ENCODE measurements at regions of chr6 and their contacts with region 1.

Region 1: GRCh38 chr6:107459283-107460082 is at the start of gene PDSS2:
- DNase-seq: peak; percentile 95
- ATAC-seq: peak; percentile 96
- H3K4me3 Mint-ChIP-seq: peak within 1 kb of the TSS; percentile 95
- H3K27ac Mint-ChIP-seq: peak within 1 kb of the TSS; percentile 90
- H3K4me1 Mint-ChIP-seq: peaks cover 16% of the 10 kb centered on the region
- H3K27me3 Mint-ChIP-seq: no peaks in the 10 kb centered on the region
- CTCF ChIP-seq: no peak
- total RNA-seq, gene PDSS2: 14.6 and 19.3 TPM in 2 replicates

Region 2: DNA sequence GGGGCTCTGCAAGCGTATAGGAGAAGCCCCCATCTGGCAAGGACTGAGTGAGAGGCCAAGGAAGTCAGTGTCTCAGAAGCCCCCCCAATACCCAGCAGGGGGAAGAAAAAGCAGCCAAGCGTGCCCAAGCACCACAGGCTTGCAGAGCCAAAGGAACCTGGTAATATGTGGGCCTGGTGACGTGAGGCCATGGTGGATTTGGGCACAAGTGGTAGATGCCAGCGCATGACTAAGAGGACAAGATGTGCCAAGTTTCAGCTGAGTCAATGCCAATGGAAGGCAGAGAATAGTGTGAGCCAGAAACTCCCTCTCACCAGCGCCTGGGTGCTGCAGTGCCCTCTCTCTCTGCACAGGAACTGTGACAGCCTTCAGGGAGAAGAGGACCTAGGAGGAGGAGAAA is 720.1 kb before region 1 on chr6:
- CTCF ChIA-PET with region 1: no interaction called
- POLR2A ChIA-PET with region 1: no interaction called
- intact Hi-C with region 1: no loop called
- DNase-seq: no peak
- ATAC-seq: peak; percentile 50
- H3K4me3 Mint-ChIP-seq: no peak overlapping the region
- H3K27ac Mint-ChIP-seq: peak overlapping the region; percentile 73
- H3K4me1 Mint-ChIP-seq: peaks cover 51% of the 10 kb centered on the region
- H3K27me3 Mint-ChIP-seq: no peaks in the 10 kb centered on the region
- CTCF ChIP-seq: no peak

Region 3: GRCh38 chr6:107318100-107318736 is 141.3 kb before region 1 on chr6:
- CTCF ChIA-PET with region 1: interaction called, 18 read pairs
- POLR2A ChIA-PET with region 1: interaction called, 16 read pairs
- intact Hi-C with region 1: loop called (anchors 1 kb)
- DNase-seq: no peak
- ATAC-seq: peak; percentile 85
- H3K4me3 Mint-ChIP-seq: no peak overlapping the region
- H3K27ac Mint-ChIP-seq: no peak overlapping the region
- H3K4me1 Mint-ChIP-seq: peaks cover 15% of the 10 kb centered on the region
- H3K27me3 Mint-ChIP-seq: no peaks in the 10 kb centered on the region
- CTCF ChIP-seq: no peak

Region 4: DNA sequence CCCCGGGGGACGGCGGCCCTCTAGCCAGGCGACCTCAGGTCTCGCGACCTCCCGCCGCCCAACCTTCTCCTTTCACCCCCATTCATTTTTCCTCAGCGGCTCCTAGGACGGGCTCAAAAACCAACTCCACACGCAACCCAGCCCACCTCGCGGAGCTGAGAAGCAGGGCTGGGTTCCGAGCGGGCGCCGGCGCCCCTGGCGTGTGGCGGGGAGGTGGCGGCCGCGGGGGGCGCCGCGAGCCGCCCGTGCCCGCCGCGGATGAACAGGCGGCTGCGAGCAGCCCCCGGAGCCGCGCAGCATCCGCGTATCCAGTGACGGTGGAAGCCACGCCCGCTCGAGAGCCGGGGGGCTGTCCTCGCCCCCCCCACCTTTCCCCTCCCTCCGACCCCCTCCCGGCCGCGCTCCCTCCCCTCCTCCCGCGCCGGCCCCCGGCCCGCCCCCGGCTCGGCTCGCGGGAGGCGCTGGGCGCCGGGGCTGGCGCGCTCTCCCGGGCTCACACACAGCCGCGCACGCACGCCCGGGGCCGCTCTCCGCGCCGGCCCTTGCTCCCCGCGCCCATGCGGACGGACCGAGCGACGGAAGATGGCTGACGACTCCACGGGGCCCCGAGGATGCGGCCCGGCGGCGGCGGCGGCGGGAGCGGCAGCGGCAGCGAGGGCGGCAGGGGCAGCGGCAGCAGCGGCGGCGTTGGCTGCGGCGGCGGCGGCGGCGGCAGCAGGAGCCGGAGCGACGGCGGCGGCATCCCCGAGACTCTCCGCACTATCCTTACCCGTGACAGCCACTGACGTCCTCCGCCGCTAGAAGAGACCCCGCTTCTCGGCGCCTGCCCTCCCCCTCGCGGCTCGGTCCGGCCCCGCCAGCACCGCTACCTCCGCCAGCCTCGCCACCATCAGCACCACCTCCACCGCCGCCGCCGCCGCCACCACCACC is 30.4 kb after region 1 on chr6 and contains the start of gene SOBP:
- CTCF ChIA-PET with region 1: interaction called, 3 read pairs
- POLR2A ChIA-PET with region 1: interaction called, 39 read pairs
- intact Hi-C with region 1: loop called (anchors 1 kb)
- DNase-seq: peak; percentile 58
- ATAC-seq: peak; percentile 60
- H3K4me3 Mint-ChIP-seq: peak within 1 kb of the TSS; percentile 90
- H3K27ac Mint-ChIP-seq: peak within 1 kb of the TSS; percentile 63
- H3K4me1 Mint-ChIP-seq: peaks cover 26% of the 10 kb centered on the region
- H3K27me3 Mint-ChIP-seq: peaks cover 28% of the 10 kb centered on the region
- CTCF ChIP-seq: no peak
- total RNA-seq, gene SOBP: 1.1 TPM in 2 replicates

Region 5: DNA sequence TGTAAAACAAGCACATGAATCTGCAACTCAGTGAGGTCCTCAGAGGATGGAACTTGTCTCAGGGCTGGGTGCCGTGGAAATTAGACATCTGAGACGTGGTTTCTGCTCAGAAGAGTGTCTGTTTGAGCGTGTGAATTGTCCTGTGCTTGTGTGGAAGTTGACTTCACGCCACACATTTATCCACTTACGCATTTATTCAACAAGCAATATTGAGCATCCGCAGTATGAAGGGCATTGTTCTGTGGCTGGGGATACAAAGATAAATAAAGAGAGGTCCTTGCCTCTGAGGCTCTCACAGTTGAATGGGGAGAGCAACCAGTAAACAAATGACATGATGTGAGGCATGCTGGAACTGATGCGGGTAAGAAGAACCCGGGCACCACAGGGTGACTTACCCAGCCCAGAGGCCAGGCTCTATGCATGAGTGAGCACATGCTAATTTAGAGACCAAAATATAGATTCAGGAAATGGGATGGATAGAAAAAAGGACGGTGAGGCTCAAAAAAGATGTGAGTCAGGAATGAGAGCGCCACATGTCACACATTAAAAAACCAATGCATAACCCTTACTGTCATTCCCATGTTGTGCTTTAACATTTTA is 90.9 kb after region 1 on chr6:
- CTCF ChIA-PET with region 1: no interaction called
- POLR2A ChIA-PET with region 1: no interaction called
- intact Hi-C with region 1: no loop called
- DNase-seq: no peak
- ATAC-seq: peak; percentile 72
- H3K4me3 Mint-ChIP-seq: peak overlapping the region; percentile 38
- H3K27ac Mint-ChIP-seq: peak overlapping the region; percentile 35
- H3K4me1 Mint-ChIP-seq: peaks cover 18% of the 10 kb centered on the region
- H3K27me3 Mint-ChIP-seq: no peaks in the 10 kb centered on the region
- CTCF ChIP-seq: no peak

Region 6: DNA sequence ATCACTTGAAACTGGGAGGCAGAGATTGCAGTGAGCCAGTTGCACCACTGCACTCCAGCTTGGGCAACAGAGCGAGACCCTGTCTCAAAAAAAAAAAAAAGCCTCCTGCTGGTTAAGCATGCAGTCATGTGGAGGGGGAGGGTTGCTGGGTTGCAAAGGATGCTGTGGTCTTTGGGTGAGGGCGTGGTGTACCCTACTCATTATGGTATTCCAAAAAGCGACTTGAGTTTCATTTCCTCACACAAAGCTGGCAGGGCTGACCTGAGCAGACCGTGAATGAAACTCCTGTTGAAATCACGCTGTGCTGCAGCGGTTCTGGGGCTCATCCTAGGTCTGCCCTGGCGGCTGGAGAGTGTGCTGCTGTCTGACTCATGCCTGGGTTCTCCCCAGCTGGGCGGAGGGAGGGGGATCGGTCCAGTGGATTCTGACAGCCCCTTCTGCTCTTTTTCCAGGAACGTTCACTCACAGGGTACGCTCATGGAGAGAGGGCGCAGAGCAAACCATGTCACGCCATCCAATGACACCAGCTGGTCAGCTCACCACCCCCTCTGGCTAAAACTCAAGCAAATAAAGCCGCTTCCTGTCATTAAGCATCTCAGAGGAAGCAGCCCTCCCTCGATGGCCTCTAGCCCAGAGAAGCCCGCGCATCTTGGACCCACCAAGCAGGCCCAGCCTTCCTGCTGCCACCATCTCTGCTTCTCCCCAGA is 198.4 kb after region 1 on chr6:
- CTCF ChIA-PET with region 1: interaction called, 6 read pairs
- POLR2A ChIA-PET with region 1: interaction called, 61 read pairs
- intact Hi-C with region 1: loop called (anchors 1 kb)
- DNase-seq: peak; percentile 70
- ATAC-seq: peak; percentile 89
- H3K4me3 Mint-ChIP-seq: peak overlapping the region; percentile 82
- H3K27ac Mint-ChIP-seq: peak overlapping the region; percentile 96
- H3K4me1 Mint-ChIP-seq: peaks cover 67% of the 10 kb centered on the region
- H3K27me3 Mint-ChIP-seq: no peaks in the 10 kb centered on the region
- CTCF ChIP-seq: no peak

Region 7: DNA sequence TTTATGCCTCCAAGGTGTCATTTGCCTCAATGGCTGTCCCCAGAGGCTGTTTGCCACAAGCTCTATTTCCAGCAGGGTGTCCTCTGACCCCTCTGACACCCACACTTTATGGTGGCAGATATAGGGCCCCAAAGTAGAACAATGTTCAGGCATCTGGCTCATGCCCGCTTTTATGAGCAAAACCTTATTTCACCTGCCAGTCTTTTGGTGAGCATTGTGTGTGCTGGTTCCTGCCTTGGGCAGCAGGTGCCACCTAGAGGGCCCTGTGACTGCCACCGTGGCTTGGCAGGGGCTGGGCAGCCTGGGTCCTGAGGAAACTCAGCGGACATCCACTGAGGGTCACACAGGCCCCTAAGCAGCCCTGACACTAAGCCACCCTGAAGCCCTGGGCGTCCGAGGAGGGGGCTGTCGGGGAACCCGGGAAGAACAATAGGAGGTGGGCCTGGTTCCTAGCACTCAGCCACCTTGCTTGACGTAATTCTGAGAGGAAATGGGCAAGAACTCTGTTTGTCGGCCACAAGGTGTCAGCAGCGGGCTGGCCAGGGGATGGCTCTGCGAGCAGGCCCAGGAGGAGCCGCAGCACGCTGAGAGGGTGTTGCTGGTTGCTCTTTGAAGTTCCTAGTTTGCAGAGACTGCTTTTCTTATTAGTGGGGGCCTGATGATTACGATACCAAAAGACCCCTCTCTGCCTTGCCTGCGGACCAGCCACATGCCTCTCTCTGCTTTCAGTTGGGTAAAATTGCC is 215.7 kb after region 1 on chr6:
- CTCF ChIA-PET with region 1: interaction called, 6 read pairs
- POLR2A ChIA-PET with region 1: interaction called, 8 read pairs
- intact Hi-C with region 1: loop called (anchors 1 kb)
- DNase-seq: peak; percentile 78
- ATAC-seq: peak; percentile 91
- H3K4me3 Mint-ChIP-seq: peak overlapping the region; percentile 82
- H3K27ac Mint-ChIP-seq: peak overlapping the region; percentile 95
- H3K4me1 Mint-ChIP-seq: peaks cover 28% of the 10 kb centered on the region
- H3K27me3 Mint-ChIP-seq: peaks cover 3% of the 10 kb centered on the region
- CTCF ChIP-seq: peak; percentile 67

Region 8: DNA sequence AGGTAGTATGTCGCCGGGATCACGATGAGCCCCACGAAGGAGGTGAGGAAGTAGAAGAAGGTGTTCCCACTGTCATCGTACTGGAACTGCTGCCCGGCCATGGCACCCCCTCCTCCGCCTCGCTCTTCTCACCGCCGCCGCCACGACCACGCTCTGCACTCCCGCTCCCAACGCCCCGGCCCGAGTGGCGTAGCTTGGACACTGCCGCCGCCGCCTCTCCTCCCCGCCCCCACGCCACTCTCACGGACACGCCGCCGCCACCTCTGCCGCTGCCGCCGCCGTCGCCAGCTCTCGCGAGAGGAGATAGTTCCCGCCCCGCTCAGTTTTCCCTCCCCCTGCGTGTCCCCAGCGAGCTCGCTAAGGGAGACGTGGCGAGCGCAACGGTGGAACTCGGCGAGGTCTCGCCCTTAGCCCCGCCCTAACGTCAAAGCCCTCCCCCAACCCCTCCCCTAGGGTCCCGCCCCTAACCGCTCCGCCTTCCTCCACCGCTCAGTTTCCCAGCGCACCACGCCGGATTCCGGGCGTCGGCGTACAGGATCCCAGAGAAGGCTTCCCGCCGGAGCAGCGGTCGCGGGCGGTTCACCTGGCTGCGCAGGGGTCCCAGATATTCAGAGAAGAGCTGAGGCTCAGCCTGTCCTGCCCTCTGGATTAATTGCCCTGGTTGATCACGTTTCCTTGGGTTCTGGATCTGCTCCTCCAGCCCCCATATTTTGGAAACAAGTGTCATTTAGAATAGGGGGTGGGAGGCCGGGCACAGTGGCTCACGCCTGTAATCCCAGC is 498.6 kb after region 1 on chr6 and contains the start of gene SEC63:
- CTCF ChIA-PET with region 1: no interaction called
- POLR2A ChIA-PET with region 1: interaction called, 5 read pairs
- intact Hi-C with region 1: loop called (anchors 5 kb)
- DNase-seq: peak; percentile 95
- ATAC-seq: peak; percentile 97
- H3K4me3 Mint-ChIP-seq: peak within 1 kb of the TSS; percentile 98
- H3K27ac Mint-ChIP-seq: peak within 1 kb of the TSS; percentile 94
- H3K4me1 Mint-ChIP-seq: peaks cover 27% of the 10 kb centered on the region
- H3K27me3 Mint-ChIP-seq: no peaks in the 10 kb centered on the region
- CTCF ChIP-seq: no peak
- total RNA-seq, gene SEC63: 64.4 and 68.3 TPM in 2 replicates

Region 9: DNA sequence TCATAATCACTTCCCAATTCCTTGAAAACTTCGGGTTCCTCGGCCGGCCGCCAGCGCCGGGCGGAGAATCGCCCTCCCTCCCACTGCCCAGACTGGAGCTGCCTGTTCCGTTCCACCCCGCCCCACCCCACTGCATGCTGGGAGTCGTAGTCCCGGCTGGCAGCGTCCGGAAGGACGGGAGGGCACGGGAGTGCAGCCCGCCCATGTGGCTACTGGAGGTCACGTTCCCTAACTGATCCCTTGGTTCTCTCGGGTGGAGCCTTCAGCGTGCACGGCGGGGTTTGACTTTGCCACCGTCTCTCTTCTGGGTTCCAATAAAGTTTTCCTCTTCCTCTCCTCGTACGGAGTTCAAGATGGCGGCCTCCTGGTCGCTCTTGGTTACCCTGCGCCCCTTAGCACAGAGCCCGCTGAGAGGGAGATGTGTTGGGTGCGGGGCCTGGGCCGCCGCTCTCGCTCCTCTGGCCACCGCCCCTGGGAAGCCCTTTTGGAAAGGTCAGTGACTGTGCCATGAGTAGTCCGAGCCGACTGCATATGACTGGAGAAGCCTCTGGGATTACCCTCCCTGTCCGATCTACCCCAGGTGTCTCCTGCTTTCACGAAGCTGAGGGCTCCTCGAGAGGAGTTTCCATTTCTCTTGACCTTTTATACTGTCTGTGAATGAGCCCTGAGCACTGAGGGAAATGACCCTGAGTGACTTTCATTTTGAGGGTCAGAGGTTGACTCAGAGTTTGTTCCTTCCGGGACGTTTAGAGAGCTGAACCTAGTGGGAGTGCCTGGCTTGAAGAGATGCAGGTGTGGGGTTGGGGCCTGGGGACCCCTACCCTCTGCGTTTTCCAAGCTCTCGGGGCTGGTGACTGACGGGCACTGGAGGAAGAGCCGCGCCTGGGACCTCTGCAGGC is 835.5 kb after region 1 on chr6 and contains the start of gene AFG1L:
- CTCF ChIA-PET with region 1: no interaction called
- POLR2A ChIA-PET with region 1: interaction called, 12 read pairs
- intact Hi-C with region 1: no loop called
- DNase-seq: peak; percentile 89
- ATAC-seq: peak; percentile 92
- H3K4me3 Mint-ChIP-seq: peak within 1 kb of the TSS; percentile 99
- H3K27ac Mint-ChIP-seq: peak within 1 kb of the TSS; percentile 100
- H3K4me1 Mint-ChIP-seq: peaks cover 30% of the 10 kb centered on the region
- H3K27me3 Mint-ChIP-seq: no peaks in the 10 kb centered on the region
- CTCF ChIP-seq: no peak
- total RNA-seq, gene AFG1L: 7.5 and 10.3 TPM in 2 replicates

Measured in activated B cell treated with CpG ODN at 0.5 μM for 24 hours (primary cell).